Left cardiac atrium (tissue), 4 donors: ENCODE measurements at regions of chr7 and their contacts with region 1.

Region 1: GRCh38 chr7:120950539-120951308 is at the start of gene ING3:
- DNase-seq: peak; percentile 97
- ATAC-seq: peak; percentile 97 to 99
- total RNA-seq, gene ING3: 12.2 to 13.8 TPM

Region 2: DNA sequence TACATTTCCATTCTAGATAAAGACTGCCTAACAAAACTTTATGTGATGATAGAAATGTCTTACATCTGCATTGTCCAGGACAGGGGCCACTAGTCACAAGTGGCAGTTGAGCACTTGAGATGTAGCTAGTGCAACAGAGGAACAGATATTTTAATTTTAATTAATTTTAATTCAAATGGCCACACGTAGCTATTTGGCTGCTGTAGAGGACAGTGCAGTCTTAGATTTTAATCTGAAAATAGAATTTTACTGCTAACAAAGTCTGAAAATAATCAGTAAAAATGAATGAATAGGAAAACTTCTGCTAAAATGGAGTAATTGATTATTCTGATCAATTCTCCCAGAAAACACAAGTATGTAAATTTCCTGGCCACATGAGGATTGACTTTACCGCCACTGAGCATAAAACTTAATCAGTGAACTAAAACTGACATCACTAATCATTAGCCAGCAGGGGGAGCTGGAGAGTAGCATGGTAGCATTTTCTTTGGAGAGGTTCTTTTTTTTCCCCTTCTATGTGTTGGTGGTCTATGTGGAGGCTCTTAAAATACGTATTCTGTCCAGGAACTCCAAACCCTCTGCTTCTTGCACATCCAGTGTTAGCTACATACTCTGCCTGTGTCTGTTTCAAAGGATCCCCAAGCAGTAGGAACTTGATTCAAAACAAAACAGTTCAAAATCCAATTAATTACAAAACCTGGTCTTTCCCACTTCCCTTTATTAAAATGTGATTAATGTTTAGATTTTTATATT is 144.9 kb before region 1 on chr7:
- intact Hi-C with region 1: loop called in 1 of 2 experiments (anchors 5 kb)
- DNase-seq: peak; percentile 44
- ATAC-seq: peak; percentile 53 to 61